Kidney (tissue), 22 donors: ENCODE measurements at regions of chr11 and their contacts with region 1.

Region 1: GRCh38 chr11:94623120-94623735 is 56.1 kb downstream of the PIWIL4 start:
- DNase-seq: peak in 4 of 5 donors; percentile 82 to 95 (median 88)
- H3K4me3 ChIP-seq: no peak overlapping the region
- H3K27ac ChIP-seq: no peak overlapping the region
- H3K4me1 ChIP-seq: peaks cover 0 to 3% (median 0%) of the 10 kb centered on the region in 3 donors
- H3K27me3 ChIP-seq: no peaks in the 10 kb centered on the region
- CTCF ChIP-seq: peak; percentile 87

Region 2: DNA sequence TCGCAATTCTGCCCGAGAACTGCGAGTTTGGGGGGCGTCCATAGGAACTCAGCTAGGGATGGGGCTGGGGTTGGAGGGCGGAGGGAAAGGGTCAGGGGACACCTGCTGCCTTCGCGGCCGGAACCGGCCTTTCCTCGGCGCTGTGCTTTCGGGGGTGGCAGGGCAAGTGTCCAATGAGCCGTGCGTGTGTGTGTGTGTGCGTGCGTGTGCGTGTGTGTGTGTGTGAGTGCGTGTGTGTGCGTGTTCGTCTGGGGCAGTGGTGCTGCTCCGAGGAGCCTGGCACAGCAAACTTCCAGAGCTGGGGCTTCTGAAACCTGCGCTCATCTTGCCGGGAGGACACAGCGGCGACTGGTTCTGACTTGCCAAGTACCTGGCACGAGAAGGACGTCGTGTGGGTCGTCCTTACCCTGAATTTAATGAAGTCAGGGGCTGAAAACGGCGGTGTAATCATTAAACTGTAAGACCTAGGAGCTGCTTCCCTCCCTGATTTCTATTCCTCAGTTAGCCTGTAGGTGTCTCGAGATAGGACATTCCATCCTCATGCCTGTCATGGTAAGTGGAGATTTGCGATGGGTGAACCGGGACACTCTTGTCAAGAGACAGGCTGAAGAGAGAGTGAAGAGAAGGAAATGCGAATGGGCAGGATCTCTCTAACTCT is 117.9 kb after region 1 on chr11:
- intact Hi-C with region 1: no loop called
- DNase-seq: peak; percentile 65 to 89 (median 75)
- H3K4me3 ChIP-seq: peak overlapping the region; percentile 51 to 66 (median 55)
- H3K27ac ChIP-seq: peak overlapping the region in 1 of 2 donors; percentile 29
- H3K4me1 ChIP-seq: peaks cover 0 to 9% (median 3%) of the 10 kb centered on the region in 3 donors
- H3K27me3 ChIP-seq: no peaks in the 10 kb centered on the region
- CTCF ChIP-seq: peak; percentile 44

Region 3: GRCh38 chr11:94794287-94795168 is 171.3 kb after region 1 on chr11:
- intact Hi-C with region 1: no loop called
- DNase-seq: peak in 4 of 5 donors; percentile 35 to 81 (median 58)
- H3K4me3 ChIP-seq: no peak overlapping the region
- H3K27ac ChIP-seq: peak overlapping the region in 1 of 2 donors; percentile 24
- H3K4me1 ChIP-seq: peaks cover 4 to 14% (median 8%) of the 10 kb centered on the region in 3 donors
- H3K27me3 ChIP-seq: no peaks in the 10 kb centered on the region
- CTCF ChIP-seq: no peak

Region 4: DNA sequence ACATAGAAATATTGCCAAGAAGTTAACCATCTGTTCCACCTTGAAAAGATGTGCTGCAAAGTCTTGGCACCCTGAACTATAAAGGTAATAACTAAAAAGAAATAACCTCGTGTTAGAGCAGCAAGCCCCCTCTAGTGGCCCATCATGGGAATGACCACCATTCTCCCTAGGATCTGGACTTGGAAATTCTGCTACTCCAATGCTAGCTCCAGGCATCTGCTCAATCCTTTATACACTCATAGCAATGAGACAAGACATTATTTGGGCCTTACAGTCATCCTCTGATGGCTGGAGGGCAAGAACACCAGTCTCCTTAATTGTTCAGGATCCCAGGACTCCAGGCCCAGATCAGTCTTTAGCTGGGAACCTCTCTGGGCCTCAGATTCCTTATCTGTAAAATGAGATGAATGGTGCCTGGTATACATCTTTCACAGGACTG is 274.1 kb after region 1 on chr11:
- intact Hi-C with region 1: loop called (anchors 10 kb)
- DNase-seq: peak in 3 of 5 donors; percentile 35 to 63 (median 45)
- H3K4me3 ChIP-seq: no peak overlapping the region
- H3K27ac ChIP-seq: no peak overlapping the region
- H3K4me1 ChIP-seq: no peaks in the 10 kb centered on the region
- H3K27me3 ChIP-seq: no peaks in the 10 kb centered on the region
- CTCF ChIP-seq: peak; percentile 79